Endothelial cell of umbilical vein (primary cell): ENCODE measurements at regions of chr13 and their contacts with region 1.

Region 1: DNA sequence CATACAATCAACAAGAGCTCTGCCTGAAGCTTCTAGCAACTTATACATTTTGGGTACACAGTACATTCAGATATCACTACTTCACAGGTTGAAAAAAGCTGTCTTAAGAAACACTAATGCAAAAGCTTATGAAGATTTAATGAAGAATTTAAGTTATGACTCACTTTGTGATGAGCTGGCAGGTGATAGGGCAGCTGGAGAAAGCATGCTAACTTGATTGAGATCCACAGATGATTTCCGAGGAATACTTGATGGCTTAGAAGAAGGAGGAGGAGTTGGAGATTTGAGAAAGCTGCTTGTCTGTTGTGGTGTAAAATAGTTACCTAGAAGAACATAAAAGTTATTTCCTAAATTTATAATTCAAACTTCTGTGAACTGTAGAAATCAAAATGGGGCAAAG is 23.3 kb downstream of the EXOSC8 start:
- DNase-seq: no peak
- H3K4me3 ChIP-seq: no peak overlapping the region
- H3K27ac ChIP-seq: no peak overlapping the region
- H3K4me1 ChIP-seq: peaks cover 15% of the 10 kb centered on the region
- H3K27me3 ChIP-seq: no peaks in the 10 kb centered on the region
- CTCF ChIP-seq: no peak
- POLR2A ChIP-seq: no peak

Region 2: GRCh38 chr13:37011002-37011401 is 12.9 kb before region 1 on chr13:
- CTCF ChIA-PET with region 1: interaction called, 5 read pairs
- POLR2A ChIA-PET with region 1: no interaction called
- dilution Hi-C with region 1: no loop called
- intact Hi-C with region 1: loop called (anchors 2 kb)
- DNase-seq: no peak
- H3K4me3 ChIP-seq: no peak overlapping the region
- H3K27ac ChIP-seq: no peak overlapping the region
- H3K4me1 ChIP-seq: no peaks in the 10 kb centered on the region
- H3K27me3 ChIP-seq: no peaks in the 10 kb centered on the region
- CTCF ChIP-seq: no peak
- POLR2A ChIP-seq: peak; percentile 27

Region 3: DNA sequence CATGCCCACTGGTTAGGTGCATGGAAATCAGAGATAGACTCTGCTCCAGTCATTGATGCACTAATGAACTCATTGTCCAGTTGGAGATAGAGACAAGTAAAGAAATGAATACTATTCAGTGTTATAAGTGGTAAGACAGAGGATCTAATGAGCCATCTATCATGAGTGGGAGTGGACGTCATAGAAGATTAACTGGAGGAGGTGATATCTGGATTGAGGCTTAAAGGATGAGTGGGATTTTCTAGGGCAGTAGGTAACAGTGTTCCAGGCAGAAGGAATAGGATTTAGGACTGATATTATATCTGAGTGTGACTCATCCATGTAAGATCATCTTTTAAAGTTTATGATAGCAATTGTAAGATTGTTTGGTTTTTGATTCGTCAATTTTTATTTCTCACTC is 233.8 kb after region 1 on chr13:
- CTCF ChIA-PET with region 1: no interaction called
- POLR2A ChIA-PET with region 1: no interaction called
- dilution Hi-C with region 1: no loop called
- intact Hi-C with region 1: no loop called
- DNase-seq: no peak
- H3K4me3 ChIP-seq: no peak overlapping the region
- H3K27ac ChIP-seq: no peak overlapping the region
- H3K4me1 ChIP-seq: no peaks in the 10 kb centered on the region
- H3K27me3 ChIP-seq: peaks cover 0 to 2% of the 10 kb centered on the region in 2 experiments
- CTCF ChIP-seq: no peak
- POLR2A ChIP-seq: no peak